Breast epithelium (tissue), 4 donors: ENCODE measurements at regions of chr3 and their contacts with region 1.

Region 1: DNA sequence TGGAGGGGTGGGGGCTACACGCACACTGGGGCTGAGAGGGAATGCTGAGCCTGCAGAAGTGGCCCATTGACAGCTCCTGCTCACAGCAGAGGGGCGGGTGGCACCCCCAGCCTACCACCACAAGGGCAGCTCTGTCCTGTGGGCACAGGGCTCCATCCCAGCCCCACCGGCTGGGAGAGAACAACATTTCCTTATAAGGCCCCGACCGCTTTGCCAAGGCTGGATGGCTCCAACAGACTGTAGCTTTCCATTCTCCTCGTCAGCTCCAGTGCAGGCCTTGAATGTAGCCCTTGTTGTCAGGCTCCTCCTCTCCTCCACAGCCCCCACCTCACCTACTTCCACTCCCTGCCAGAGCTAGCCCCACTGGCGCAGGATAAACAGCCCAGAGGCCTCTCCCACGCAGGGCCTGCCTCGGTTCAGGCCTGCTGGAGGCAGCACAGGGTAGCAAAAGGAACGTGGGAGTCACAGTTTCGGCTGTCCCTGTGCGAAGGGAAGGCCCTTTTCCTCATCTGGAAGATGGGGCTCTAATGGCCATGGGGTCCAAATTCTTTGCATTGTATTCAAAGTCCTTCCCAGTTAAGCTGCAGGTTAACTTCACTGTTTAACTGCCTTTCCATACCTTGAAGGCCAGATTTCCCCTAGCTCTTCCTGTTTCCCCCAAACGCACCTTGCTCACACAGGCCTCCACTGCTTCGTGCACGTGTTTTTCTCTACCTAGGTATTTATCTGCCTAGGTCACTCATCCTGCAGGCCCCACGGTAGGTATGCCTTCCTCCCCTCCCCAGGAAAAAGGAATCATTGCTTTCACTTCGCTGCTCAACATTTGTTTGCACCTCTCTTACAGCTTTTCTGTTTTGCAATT is 101.6 kb upstream of the LPP start:
- DNase-seq: peak; percentile 86 to 99
- H3K4me3 ChIP-seq: peak overlapping the region in 2 of 3 donors; percentile 28 to 59
- H3K27ac ChIP-seq: peak overlapping the region; percentile 97 to 98
- H3K4me1 ChIP-seq: peaks cover 11 to 16% of the 10 kb centered on the region in 2 donors
- H3K27me3 ChIP-seq: no peaks in the 10 kb centered on the region
- CTCF ChIP-seq: peak; percentile 40 to 77 (median 57)
- POLR2A ChIP-seq: no peak

Region 2: DNA sequence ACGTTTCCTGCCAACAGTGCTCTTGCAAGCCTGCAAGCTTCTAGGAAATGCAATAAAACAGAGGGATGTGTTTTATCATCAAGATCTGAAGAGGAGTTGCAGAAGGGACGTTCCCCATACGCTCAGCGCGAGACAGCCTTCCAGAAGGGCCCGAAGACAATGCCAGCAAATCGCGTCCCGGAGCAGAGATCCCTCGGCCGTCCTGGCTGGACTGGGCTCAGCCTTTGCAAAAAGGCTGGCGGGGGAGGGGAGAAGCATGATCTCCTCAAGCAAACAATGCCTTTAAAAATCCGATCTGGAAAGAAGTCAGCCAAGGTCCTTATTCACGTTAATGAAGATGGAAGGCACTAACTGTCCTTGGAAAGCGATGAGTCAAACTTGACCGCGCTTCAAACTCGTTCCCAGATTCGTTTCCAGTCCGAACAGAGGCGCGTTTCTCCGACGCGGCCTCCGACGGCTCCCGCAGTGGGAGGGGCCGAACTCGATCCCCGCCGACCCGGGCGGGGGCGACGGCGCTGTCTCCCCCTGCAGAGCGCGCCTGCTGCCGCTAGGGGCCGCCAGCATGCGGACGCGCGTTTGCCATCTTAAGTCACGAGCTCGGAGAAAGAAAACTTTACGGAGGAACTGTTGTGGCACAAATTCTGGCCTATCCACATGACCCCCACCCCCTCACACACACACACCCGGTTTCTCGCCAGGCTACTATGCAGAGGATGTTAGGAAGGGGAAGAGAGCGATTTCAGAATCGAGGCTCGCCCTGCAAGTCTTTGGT is 312.7 kb before region 1 on chr3:
- intact Hi-C with region 1: loop called (anchors 5 kb)
- DNase-seq: peak; percentile 79 to 89
- H3K4me3 ChIP-seq: peak overlapping the region; percentile 64 to 93 (median 73)
- H3K27ac ChIP-seq: peak overlapping the region; percentile 99
- H3K4me1 ChIP-seq: peaks cover 5 to 14% of the 10 kb centered on the region in 2 donors
- H3K27me3 ChIP-seq: no peaks in the 10 kb centered on the region
- CTCF ChIP-seq: peak; percentile 97 to 99 (median 99)
- POLR2A ChIP-seq: peak; percentile 10

Region 3: GRCh38 chr3:188034989-188035388 is 17.4 kb before region 1 on chr3:
- intact Hi-C with region 1: loop called (anchors 1 kb)
- DNase-seq: no peak
- H3K4me3 ChIP-seq: no peak overlapping the region
- H3K27ac ChIP-seq: no peak overlapping the region
- H3K4me1 ChIP-seq: peaks cover 0 to 8% of the 10 kb centered on the region in 2 donors
- H3K27me3 ChIP-seq: no peaks in the 10 kb centered on the region
- CTCF ChIP-seq: no peak
- POLR2A ChIP-seq: no peak

Region 4: GRCh38 chr3:188194332-188194731 is 141.9 kb after region 1 on chr3:
- intact Hi-C with region 1: no loop called
- DNase-seq: no peak
- H3K4me3 ChIP-seq: no peak overlapping the region
- H3K27ac ChIP-seq: peak overlapping the region; percentile 54 to 60
- H3K4me1 ChIP-seq: peaks cover 0 to 12% of the 10 kb centered on the region in 2 donors
- H3K27me3 ChIP-seq: no peaks in the 10 kb centered on the region
- CTCF ChIP-seq: no peak
- POLR2A ChIP-seq: no peak

Region 5: GRCh38 chr3:188962253-188963247 is 910.1 kb after region 1 on chr3:
- intact Hi-C with region 1: loop called (anchors 10 kb)
- DNase-seq: no peak
- H3K4me3 ChIP-seq: no peak overlapping the region
- H3K27ac ChIP-seq: peak overlapping the region; percentile 79 to 84
- H3K4me1 ChIP-seq: no peaks in the 10 kb centered on the region
- H3K27me3 ChIP-seq: no peaks in the 10 kb centered on the region
- CTCF ChIP-seq: no peak
- POLR2A ChIP-seq: no peak